ENCODE measurements at regions of chr18 and their contacts with region 1.

Region 1: GRCh38 chr18:48410095-48410920 is 1.1 kb upstream of the ZBTB7C start:
- DNase-seq: peak; percentile 84
- ATAC-seq: peak; percentile 85 to 86
- H3K4me3 ChIP-seq: peak overlapping the region; percentile 78 to 88 (median 85)
- H3K27ac ChIP-seq: peak overlapping the region; percentile 71 to 88 (median 78)
- H3K4me1 ChIP-seq: peaks cover 10 to 11% of the 10 kb centered on the region in 2 donors
- H3K27me3 ChIP-seq: peaks cover 21 to 38% (median 27%) of the 10 kb centered on the region in 3 donors
- CTCF ChIP-seq: peak in 1 of 5 experiments; percentile 10
- POLR2A ChIP-seq: peak; percentile 76 to 79

Region 2: DNA sequence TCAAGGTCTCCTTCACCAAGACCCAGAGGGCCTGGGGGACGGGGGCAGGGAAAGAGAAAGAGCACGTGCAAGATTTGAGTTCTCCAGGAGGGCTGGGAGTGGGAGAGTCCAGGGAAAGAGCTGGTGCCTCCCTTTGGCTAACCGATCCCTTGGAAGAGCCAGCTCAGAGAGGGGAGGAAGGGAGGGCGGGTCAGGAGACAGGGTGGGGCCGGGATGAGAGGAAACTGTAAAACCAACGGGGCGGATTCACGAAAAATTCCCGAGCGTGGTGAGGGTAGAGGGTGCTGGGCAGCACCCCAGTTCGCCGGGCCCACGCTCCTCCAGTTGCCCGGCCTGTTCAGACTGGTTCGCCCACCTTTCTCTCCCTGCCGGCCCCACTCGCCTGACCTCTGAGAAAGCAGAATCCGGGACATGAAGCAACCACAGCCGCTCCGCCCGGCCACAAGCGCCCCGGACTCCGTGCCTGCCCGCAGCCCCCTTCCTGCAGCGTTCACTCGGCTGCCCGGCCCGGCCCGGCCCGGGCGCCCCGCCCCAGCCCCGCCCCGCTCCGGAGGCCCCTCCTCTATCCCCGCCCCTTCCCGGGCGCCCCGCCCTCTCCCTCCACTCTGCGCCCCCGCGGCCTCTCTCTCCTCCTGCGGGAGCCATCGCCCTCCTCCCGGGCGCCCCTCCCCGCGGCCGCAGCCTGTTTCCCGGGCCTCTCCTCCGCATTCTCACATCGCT is 249.0 kb before region 1 on chr18:
- in situ Hi-C with region 1: loop called in 1 of 4 experiments (anchors 25 kb)
- intact Hi-C with region 1: loop called (anchors 5 kb)
- DNase-seq: peak; percentile 48 to 67
- ATAC-seq: peak; percentile 91 to 92
- H3K4me3 ChIP-seq: peak overlapping the region; percentile 50 to 83 (median 67)
- H3K27ac ChIP-seq: peak overlapping the region; percentile 47 to 80 (median 65)
- H3K4me1 ChIP-seq: peaks cover 0 to 4% of the 10 kb centered on the region in 2 donors
- H3K27me3 ChIP-seq: no peaks in the 10 kb centered on the region
- CTCF ChIP-seq: no peak
- POLR2A ChIP-seq: peak in 1 of 2 donors; percentile 14

Region 3: DNA sequence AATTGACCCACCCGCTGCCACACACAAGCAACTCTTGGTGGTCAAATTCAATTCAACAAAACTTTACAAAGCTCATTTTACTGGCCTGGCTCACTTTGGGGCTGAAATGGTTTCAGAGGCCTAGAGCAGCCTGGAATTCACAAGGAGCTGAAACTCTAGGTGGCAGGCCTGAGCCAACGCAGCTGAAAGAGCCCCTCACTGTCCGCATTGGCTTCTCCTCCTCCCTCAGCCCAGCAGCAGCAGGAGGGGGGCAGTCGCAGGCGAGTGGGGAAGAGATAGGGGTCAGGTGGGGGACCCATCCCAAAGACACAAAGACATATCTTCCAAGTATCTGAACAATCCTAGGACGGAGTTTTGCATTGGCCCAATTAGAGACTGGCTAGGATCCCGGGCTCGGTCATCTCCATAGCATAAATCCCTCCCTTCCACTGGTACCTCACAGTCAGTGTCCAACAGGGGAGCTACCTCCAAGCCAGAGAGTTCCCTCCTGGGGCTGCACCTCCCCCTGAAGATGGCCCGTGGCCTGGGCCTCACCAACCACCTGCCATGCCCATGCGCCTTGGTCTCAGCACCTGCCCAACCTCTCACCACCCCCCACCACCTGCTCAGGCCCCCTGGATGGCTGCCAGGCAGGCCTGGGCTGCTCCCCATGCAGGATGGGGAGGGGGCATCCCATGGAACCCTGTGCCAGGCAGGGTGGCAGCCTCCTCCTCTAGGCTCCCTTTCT is 114.6 kb before region 1 on chr18:
- in situ Hi-C with region 1: no loop called
- intact Hi-C with region 1: loop called (anchors 10 kb)
- DNase-seq: no peak
- ATAC-seq: no peak
- H3K4me3 ChIP-seq: no peak overlapping the region
- H3K27ac ChIP-seq: peak overlapping the region in 3 of 4 donors; percentile 78 to 84 (median 84)
- H3K4me1 ChIP-seq: peaks cover 24 to 29% of the 10 kb centered on the region in 2 donors
- H3K27me3 ChIP-seq: no peaks in the 10 kb centered on the region
- CTCF ChIP-seq: peak in 2 of 5 experiments; percentile 13 to 22
- POLR2A ChIP-seq: no peak

Region 4: DNA sequence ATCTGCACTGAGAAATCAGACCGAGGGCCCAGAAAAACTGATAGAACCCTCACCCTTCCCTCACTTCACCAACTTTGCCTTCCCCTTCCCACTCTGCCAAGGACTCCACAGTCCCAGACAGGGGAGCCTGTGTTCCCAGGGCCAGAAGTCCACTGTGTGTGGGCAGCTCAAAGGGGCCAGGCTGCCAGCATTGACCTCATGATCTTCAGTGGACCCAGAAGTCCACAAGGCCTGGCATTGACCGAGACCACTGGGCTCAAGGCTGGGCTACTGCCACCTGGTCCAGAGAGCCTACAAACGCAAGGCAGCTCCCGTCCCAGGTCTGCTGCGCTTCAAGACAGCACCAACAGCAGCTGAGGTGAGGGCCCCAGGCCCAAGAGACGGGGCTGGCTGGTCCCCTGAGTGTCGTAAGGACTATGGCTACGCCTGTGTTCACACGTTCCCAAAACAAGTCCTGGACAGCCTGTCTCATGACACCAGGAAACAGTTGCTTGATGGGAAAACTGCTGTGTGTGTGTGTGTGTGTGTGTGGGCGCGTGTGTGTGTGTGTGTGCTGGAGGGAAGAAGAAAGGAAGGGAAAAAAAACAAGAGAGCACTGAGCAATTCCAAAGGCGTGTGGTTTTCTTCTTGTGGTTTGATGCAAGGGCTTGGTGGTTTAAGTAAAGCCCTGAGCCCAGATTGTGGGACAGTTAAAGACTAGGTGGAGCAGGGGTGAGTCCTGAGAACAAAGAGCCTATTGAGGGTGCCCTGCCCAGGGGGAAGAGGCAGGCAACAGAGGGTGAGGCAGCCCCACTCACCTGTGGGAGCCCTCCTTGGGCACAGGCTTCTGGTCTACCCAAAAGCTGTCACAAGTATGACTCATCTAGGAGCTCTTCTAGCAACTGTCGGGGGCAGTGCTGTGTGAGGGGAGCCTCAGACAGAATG is 45.5 kb after region 1 on chr18:
- in situ Hi-C with region 1: no loop called
- intact Hi-C with region 1: no loop called
- DNase-seq: peak in 1 of 2 donors; percentile 28
- ATAC-seq: peak; percentile 44 to 61
- H3K4me3 ChIP-seq: no peak overlapping the region
- H3K27ac ChIP-seq: no peak overlapping the region
- H3K4me1 ChIP-seq: no peaks in the 10 kb centered on the region
- H3K27me3 ChIP-seq: no peaks in the 10 kb centered on the region
- CTCF ChIP-seq: no peak
- POLR2A ChIP-seq: no peak